ENCODE measurements at regions of chrX and their contacts with region 1.

Region 1: DNA sequence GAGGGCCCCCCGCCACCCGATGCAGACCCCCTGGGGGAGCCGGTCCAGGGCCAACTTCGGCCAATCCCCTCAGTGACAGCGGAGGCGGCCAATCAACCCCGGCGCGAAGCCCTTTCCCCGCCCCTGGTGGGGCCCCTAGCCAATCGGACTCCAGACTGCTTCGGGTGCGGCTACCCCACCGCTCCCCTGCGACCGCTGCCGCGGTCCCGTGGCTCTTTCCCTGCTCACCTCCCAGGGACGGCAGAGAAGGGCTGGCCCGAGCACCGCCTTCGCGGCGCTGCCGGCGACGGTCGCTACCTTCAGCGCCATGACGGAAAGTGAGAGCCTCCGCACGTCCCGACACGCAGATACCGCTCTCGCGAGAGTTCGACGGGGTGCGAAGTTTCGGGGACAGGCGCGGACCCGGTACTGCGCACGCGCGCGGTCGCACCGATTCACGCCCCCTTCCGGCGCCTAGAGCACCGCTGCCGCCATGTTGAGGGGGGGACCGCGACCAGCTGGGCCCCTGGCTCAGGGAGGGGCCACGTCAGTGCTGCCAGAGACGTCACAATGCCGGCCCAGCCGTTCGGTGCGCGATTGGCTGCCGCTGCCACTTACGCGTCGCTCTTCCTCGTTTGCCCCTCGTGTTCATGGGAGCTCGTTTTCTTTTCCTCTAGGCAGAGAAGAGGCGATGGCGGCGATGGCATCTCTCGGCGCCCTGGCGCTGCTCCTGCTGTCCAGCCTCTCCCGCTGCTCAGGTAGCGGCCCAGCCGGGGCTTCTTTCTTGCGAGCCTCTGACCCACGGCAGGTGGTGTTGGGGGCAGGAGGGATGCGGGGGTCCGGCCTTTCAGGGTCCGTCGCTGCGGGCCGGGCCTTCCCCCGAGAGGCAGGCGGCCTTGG is at the starts of genes IDH3G and SSR4:
- DNase-seq: peak; percentile 96
- total RNA-seq, gene IDH3G: 68.5 TPM
- total RNA-seq, gene SSR4: 140 TPM

Region 2: DNA sequence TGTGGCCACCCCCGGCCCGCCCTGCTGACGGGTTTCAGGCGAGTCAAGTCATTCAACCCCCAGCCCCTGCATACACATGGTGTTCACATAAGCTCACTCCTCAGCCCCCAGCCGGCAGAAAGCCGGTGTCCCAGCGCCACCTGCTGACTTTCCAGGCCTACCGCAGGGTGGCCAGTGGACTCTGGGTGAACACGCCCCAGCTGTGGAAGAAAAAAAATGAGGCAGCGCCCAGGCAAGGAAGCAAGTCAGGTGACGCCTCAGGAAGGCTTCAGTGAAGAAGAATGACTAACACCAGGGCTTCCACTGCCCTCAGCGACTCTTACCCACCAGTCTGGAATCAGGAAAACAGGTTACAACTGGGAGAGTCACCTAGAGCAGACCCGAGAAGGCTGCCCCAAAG is 85.8 kb before region 1 on chrX:
- intact Hi-C with region 1: no loop called
- DNase-seq: no peak

Region 3: GRCh38 chrX:153927922-153928760 is 133.9 kb after region 1 on chrX:
- intact Hi-C with region 1: loop called (anchors 1 kb)
- DNase-seq: peak; percentile 98